ENCODE measurements at regions of chr9 and their contacts with region 1.

Region 1: DNA sequence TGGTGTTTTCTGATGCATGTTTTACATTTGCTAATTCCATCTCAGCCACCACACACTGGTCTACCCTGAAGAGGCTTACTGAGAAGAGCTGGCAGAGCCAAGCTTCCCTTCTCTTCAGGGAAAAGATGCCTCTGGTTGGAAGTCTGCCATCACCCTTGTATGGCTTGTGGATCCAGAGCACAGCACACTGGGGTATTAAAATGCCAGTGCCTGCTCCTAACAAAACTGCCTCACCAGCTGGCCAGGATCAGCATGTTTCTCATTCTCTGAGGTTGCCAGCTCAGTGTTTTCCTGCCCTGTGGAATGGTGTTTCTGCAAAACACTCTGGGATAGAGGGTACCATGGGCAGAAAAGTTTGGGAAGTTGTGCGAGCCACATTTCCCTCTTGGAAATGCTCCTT is 31.6 kb upstream of the ZNF618 start:
- DNase-seq: no peak
- H3K4me3 ChIP-seq: no peak overlapping the region
- H3K27ac ChIP-seq: no peak overlapping the region
- H3K4me1 ChIP-seq: no peaks in the 10 kb centered on the region
- H3K27me3 ChIP-seq: no peaks in the 10 kb centered on the region
- CTCF ChIP-seq: no peak

Region 2: GRCh38 chr9:113756476-113757192 is 87.8 kb before region 1 on chr9:
- CTCF ChIA-PET with region 1: no interaction called
- dilution Hi-C with region 1: loop called (anchors 5 kb)
- in situ Hi-C with region 1: no loop called
- intact Hi-C with region 1: no loop called
- DNase-seq: no peak
- H3K4me3 ChIP-seq: no peak overlapping the region
- H3K27ac ChIP-seq: no peak overlapping the region
- H3K4me1 ChIP-seq: no peaks in the 10 kb centered on the region
- H3K27me3 ChIP-seq: no peaks in the 10 kb centered on the region
- CTCF ChIP-seq: no peak

Region 3: GRCh38 chr9:113772121-113772810 is 72.2 kb before region 1 on chr9:
- CTCF ChIA-PET with region 1: no interaction called
- dilution Hi-C with region 1: no loop called
- in situ Hi-C with region 1: no loop called
- intact Hi-C with region 1: no loop called
- DNase-seq: peak; percentile 24
- H3K4me3 ChIP-seq: no peak overlapping the region
- H3K27ac ChIP-seq: no peak overlapping the region
- H3K4me1 ChIP-seq: no peaks in the 10 kb centered on the region
- H3K27me3 ChIP-seq: no peaks in the 10 kb centered on the region
- CTCF ChIP-seq: no peak

Region 4: DNA sequence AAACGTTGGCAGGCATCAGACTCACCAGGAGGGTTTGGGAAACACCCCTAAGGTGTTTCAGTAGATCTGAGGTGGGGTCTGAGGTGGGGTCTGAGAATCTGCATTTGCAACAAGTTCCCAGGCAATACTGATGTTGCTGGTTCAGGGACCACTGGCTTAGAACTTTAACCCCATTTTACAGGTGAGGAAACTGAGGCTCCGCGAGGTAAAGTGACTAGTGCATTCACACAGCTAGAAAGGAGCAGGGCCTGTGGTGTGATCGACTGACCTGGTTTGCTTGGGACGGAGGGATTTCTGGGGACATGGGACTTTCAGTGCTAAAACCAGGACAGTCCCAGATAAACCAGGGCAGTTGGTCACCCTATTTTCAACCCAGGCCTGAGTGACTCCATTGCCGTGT is 49.7 kb before region 1 on chr9:
- CTCF ChIA-PET with region 1: no interaction called
- dilution Hi-C with region 1: loop called (anchors 5 kb)
- in situ Hi-C with region 1: no loop called
- intact Hi-C with region 1: no loop called
- DNase-seq: no peak
- H3K4me3 ChIP-seq: no peak overlapping the region
- H3K27ac ChIP-seq: no peak overlapping the region
- H3K4me1 ChIP-seq: no peaks in the 10 kb centered on the region
- H3K27me3 ChIP-seq: peaks cover 4% of the 10 kb centered on the region
- CTCF ChIP-seq: no peak

Measured in mammary epithelial cell (primary cell).